CD4-positive, alpha-beta T cell (primary cell): ENCODE measurements at regions of chr19 and their contacts with region 1.

Region 1: DNA sequence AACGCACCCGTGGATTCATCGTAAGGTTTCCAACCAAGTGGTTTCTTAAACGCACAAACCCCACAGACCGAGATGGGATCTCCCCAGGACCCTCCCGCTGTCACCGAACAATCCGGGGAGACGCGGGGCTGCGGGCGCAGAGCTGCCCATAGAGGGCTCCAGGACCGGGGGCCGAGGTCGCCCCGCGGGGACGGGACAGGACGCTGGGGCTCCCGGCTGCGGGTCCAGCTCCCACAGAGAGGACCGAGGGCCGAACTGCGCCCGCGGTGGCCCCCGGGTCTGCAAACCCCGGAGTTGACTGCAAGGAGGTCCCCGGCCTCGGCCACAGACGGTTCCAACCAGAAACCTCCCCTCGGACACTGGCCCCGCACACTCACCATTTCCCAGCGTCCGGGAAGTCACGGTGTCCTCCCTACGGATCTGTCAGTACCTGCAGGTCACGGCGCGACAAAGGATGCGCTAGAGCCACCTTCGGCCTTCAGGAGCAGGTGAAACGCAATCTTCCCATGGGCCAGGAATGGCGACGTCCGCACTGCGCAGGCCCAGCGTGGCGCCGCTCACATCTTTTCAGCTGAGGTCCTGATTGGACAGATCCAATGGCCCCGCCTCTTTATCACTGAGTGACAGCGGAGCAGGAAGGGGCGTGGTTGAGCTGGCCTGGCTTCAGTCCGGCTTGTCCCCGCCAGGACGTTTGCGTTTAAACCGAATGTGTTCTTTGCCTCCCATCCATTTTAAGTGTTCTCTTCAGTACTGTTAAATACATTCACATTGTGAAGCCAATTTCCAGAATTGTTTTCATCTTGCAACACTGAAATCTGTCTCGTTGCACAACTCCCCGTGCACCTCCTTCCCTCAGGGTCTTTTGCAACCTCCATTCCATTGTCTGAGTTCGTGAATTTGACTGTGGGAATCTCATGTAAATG is at the start of gene ZNF14:
- DNase-seq: peak; percentile 83 to 96 (median 88)
- ATAC-seq: peak; percentile 99
- H3K4me3 ChIP-seq: peak within 1 kb of the TSS; percentile 95
- H3K4me3 Mint-ChIP-seq: peak within 1 kb of the TSS; percentile 99
- H3K27ac ChIP-seq: peak within 1 kb of the TSS; percentile 69 to 79
- H3K27ac Mint-ChIP-seq: peak within 1 kb of the TSS; percentile 94
- H3K4me1 ChIP-seq: peaks cover 33% of the 10 kb centered on the region
- H3K4me1 Mint-ChIP-seq: peaks cover 27% of the 10 kb centered on the region
- H3K27me3 ChIP-seq: no peaks in the 10 kb centered on the region
- H3K27me3 Mint-ChIP-seq: no peaks in the 10 kb centered on the region
- CTCF ChIP-seq: no peak
- total RNA-seq, gene ZNF14: 36.9 to 37.3 TPM

Region 2: DNA sequence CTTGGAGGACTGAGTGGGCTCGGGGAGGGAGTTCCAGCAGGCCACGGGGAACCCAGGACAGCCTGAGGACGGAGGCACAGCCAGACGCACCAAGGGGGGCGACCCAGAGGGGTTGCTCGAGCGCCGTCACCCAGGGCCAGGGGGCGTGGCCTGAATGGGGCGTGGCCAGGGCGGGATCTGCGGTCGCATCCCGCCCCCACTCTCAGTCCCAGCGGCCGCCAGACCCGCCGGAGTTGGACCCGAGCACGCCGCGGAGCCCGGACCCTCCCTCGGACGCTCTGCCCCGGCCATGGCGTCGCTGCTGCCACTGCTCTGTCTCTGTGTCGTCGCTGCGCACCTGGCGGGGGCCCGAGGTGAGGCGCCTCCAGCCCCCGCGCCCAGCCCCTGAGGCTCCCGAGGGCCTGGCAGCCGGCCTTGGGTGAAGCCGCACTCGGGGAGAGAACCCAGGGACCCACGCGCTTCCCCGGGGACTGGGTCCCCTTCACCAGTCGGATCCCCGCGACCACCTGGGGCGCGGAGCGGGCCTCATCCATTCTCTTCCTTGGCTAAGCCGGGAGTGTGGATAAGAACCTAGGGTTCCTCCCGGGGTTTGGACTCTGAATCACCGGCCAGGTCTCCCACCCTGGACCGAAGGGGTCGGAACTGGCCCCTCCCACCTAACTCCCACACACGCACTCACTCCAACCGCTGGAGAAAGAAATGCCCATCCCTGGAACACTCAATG is 194.6 kb before region 1 on chr19 and contains the start of gene CILP2:
- CTCF ChIA-PET with region 1: no interaction called
- POLR2A ChIA-PET with region 1: interaction called, 3 read pairs
- intact Hi-C with region 1: loop called in 1 of 2 experiments (anchors 5 kb)
- DNase-seq: peak in 8 of 14 experiments; percentile 36 to 68 (median 42)
- ATAC-seq: peak; percentile 5
- H3K4me3 ChIP-seq: peak within 1 kb of the TSS; percentile 25
- H3K4me3 Mint-ChIP-seq: peak within 1 kb of the TSS; percentile 71
- H3K27ac ChIP-seq: no peak within 1 kb of the TSS
- H3K27ac Mint-ChIP-seq: peak within 1 kb of the TSS; percentile 51
- H3K4me1 ChIP-seq: peaks cover 47% of the 10 kb centered on the region
- H3K4me1 Mint-ChIP-seq: peaks cover 41% of the 10 kb centered on the region
- H3K27me3 ChIP-seq: no peaks in the 10 kb centered on the region
- H3K27me3 Mint-ChIP-seq: no peaks in the 10 kb centered on the region
- CTCF ChIP-seq: no peak
- total RNA-seq, gene CILP2: 1.1 to 1.7 TPM

Region 3: DNA sequence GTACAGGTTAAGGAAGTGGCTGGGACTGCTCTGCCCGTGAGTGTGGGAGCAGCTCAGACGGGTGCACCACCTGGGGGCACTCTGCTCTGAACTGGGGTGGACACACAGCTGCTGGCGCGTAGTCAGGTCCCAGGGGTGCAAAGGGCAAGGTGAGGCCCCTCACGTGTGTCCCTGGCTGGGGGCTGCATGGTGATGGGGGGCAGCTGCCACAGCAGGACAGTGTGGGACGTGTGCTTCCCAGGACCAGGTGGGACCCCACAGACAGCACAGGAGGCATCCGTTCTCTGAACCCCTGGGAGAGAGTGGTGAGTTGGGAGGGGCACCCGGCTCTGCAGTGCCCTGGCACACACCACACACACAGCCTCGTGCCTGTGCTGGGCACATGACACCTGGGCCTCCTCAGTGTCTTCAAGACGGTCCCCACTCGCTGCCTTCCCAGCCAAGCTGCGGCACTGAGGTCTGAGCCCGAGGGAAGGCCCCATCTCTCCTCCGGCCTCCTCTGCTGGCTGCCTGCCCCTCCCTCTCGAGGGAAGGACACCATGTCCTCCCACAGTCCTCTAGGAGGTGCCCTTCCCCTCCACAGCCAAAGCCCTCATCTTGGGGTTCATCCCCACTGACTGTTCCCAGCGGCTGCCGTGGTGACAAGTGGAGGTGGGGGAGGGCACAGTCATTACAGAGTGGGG is 170.0 kb before region 1 on chr19:
- CTCF ChIA-PET with region 1: no interaction called
- POLR2A ChIA-PET with region 1: no interaction called
- intact Hi-C with region 1: no loop called
- DNase-seq: peak in 10 of 14 experiments; percentile 27 to 74 (median 45)
- ATAC-seq: peak; percentile 72
- H3K4me3 ChIP-seq: no peak overlapping the region
- H3K4me3 Mint-ChIP-seq: no peak overlapping the region
- H3K27ac ChIP-seq: no peak overlapping the region
- H3K27ac Mint-ChIP-seq: no peak overlapping the region
- H3K4me1 ChIP-seq: peaks cover 19% of the 10 kb centered on the region
- H3K4me1 Mint-ChIP-seq: peaks cover 33% of the 10 kb centered on the region
- H3K27me3 ChIP-seq: no peaks in the 10 kb centered on the region
- H3K27me3 Mint-ChIP-seq: no peaks in the 10 kb centered on the region
- CTCF ChIP-seq: peak; percentile 36

Region 4: DNA sequence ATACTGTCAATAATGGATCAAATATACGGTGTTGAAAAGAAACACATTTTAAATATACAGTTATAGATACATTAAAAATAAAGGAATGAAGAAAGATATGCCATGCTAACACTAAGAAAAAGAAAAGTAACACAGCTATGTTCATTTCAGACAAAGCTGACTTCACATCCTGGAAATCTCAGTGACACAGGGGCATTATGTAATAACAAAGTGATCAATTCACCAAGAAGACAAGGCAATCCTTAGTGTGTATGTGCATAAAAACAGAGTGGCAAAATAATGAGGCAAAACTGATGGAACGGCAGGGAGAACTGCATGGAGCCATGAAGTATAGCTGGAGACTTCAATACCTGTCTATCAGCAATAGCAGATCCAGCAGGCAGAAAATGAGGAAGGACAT is 13.0 kb before region 1 on chr19:
- CTCF ChIA-PET with region 1: interaction called, 3 read pairs
- POLR2A ChIA-PET with region 1: interaction called, 16 read pairs
- intact Hi-C with region 1: no loop called
- DNase-seq: peak in 1 of 14 experiments; percentile 28
- ATAC-seq: peak; percentile 44
- H3K4me3 ChIP-seq: no peak overlapping the region
- H3K4me3 Mint-ChIP-seq: peak overlapping the region; percentile 28
- H3K27ac ChIP-seq: no peak overlapping the region
- H3K27ac Mint-ChIP-seq: no peak overlapping the region
- H3K4me1 ChIP-seq: no peaks in the 10 kb centered on the region
- H3K4me1 Mint-ChIP-seq: peaks cover 4% of the 10 kb centered on the region
- H3K27me3 ChIP-seq: no peaks in the 10 kb centered on the region
- H3K27me3 Mint-ChIP-seq: no peaks in the 10 kb centered on the region
- CTCF ChIP-seq: no peak

Region 5: DNA sequence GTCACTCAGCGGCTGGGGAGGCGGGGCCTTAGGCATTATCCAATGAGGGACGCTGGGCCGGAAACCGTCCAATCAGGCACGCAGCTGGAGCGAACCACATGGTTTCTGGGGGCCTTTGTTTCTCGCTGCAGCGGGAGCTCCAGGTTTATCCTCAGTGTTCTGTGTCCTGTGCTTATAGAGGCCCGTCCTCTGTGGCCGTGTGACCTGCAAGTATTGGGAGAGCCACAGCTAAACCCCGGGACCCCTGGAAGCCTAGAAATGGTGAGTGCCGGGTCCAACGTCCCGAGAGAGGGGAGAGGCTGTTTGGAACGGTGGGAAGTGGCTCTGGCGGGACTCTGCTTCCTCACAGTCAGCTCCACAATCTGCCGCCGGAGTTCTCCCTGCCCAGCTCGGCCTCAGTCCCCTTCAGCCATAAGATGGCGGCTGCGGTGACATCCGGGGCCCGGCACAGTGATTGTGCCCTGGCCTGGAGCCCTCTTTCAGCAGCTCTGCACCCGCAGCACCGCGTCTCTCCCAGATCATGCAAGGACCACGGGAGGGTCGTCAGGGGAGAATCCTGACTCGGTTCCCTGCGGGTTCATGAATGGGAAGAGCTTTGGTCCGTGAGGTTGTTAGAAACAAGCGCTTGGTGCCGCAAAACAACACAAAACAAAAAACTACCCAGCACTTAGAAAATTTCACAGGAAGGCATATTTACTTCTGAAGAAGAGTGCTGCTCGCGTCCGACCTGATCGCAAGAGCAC is 133.1 kb after region 1 on chr19 and contains the start of gene ZNF253:
- CTCF ChIA-PET with region 1: no interaction called
- POLR2A ChIA-PET with region 1: interaction called, 39 read pairs
- intact Hi-C with region 1: loop called in 1 of 2 experiments (anchors 5 kb)
- DNase-seq: peak; percentile 88 to 96 (median 94)
- ATAC-seq: peak; percentile 90
- H3K4me3 ChIP-seq: peak within 1 kb of the TSS; percentile 89
- H3K4me3 Mint-ChIP-seq: peak within 1 kb of the TSS; percentile 97
- H3K27ac ChIP-seq: peak within 1 kb of the TSS; percentile 86 to 88
- H3K27ac Mint-ChIP-seq: peak within 1 kb of the TSS; percentile 97
- H3K4me1 ChIP-seq: peaks cover 13% of the 10 kb centered on the region
- H3K4me1 Mint-ChIP-seq: peaks cover 41% of the 10 kb centered on the region
- H3K27me3 ChIP-seq: no peaks in the 10 kb centered on the region
- H3K27me3 Mint-ChIP-seq: no peaks in the 10 kb centered on the region
- CTCF ChIP-seq: no peak
- total RNA-seq, gene ZNF253: 4.9 to 5.2 TPM

Region 6: DNA sequence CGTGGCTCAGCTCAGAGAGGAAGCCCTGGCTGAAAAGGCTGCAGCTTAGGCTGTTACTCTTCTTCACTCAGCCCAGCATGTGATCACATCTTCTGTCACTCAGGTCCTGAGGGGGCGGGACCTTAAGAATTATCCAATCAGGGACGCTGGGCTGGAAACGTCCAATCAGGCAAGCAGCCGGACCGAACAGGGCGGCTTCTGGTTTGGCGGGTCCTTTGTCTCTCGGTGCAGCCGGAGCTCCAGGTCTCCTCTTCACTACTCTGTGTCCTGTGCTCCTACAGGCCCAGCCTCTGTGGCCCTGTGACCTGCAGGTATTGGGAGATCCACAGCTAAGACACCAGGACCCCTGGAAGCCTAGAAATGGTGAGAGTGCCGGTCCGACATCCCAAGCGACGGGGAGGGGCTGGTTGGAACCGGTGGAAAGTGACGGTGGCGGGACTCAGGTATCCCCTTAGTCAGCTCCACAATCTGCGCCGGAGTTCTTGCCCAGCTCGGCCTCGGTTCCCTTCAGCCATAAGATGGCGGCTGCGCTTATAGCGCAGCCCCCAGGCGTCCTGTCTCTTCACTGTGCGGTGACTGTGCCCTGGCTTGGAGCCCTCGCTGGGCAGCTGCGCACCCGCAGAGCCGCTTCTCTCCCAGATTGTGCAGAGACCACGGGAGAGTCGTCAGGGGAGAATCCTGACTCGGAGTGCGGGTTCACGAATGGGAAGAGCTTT is 168.0 kb after region 1 on chr19 and contains the start of gene ZNF93:
- CTCF ChIA-PET with region 1: no interaction called
- POLR2A ChIA-PET with region 1: interaction called, 28 read pairs
- intact Hi-C with region 1: no loop called
- DNase-seq: peak; percentile 80 to 96 (median 85)
- ATAC-seq: peak; percentile 97
- H3K4me3 ChIP-seq: peak within 1 kb of the TSS; percentile 96
- H3K4me3 Mint-ChIP-seq: peak within 1 kb of the TSS; percentile 94
- H3K27ac ChIP-seq: peak within 1 kb of the TSS; percentile 70
- H3K27ac Mint-ChIP-seq: peak within 1 kb of the TSS; percentile 82
- H3K4me1 ChIP-seq: peaks cover 20% of the 10 kb centered on the region
- H3K4me1 Mint-ChIP-seq: peaks cover 47% of the 10 kb centered on the region
- H3K27me3 ChIP-seq: no peaks in the 10 kb centered on the region
- H3K27me3 Mint-ChIP-seq: no peaks in the 10 kb centered on the region
- CTCF ChIP-seq: no peak
- total RNA-seq, gene ZNF93: 4.4 to 5.4 TPM